A673 (cell line): ENCODE measurements at regions of chr2 and their contacts with region 1.

Region 1: DNA sequence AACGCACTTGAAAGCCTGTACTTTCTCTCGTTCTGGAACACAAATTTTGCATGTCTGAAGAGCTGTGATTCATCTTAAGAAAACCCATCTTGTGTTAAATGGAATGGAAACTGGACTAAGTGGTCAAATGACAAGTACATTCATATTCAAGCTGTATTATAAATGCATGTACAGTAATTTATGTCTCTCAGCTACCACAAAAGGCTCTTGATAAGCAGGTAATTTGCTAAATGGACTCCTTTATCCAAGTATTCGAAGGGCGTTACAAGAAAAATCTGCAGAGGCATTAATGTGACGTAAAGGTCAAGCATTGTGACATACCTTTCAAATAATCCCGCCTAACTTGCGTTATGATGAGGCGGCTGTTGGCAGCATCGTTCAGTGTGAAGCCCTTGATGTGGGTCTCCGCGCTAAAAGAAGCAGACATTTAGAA is 66.6 kb downstream of the ABCG8 start:
- DNase-seq: peak; percentile 7
- H3K4me3 ChIP-seq: no peak overlapping the region
- H3K27ac ChIP-seq: no peak overlapping the region
- H3K4me1 ChIP-seq: peaks cover 2% of the 10 kb centered on the region
- H3K27me3 ChIP-seq: no peaks in the 10 kb centered on the region
- CTCF ChIP-seq: no peak

Region 2: DNA sequence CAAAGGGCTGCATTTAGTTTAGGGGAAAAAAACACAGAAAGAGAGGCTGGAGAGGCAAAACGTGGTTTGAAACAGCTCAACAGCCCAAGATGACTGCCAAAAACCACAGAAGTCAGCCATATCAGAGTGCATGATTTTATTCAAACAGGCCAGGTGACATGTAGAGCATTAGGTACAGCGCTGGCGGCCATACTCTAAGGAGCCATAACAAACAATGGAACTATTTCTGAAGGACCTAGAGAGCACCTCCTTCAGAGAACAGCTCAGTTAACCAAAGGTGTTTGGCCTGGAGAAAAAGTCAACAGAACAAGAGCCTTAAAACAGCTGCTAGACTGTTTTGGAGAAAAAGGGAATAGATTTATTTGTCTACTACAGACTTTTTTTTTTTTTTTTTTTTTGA is 312.1 kb before region 1 on chr2:
- CTCF ChIA-PET with region 1: interaction called, 14 read pairs
- POLR2A ChIA-PET with region 1: no interaction called
- intact Hi-C with region 1: no loop called
- DNase-seq: no peak
- H3K4me3 ChIP-seq: no peak overlapping the region
- H3K27ac ChIP-seq: no peak overlapping the region
- H3K4me1 ChIP-seq: peaks cover 7% of the 10 kb centered on the region
- H3K27me3 ChIP-seq: no peaks in the 10 kb centered on the region
- CTCF ChIP-seq: no peak

Region 3: GRCh38 chr2:43927442-43927841 is 22.1 kb after region 1 on chr2:
- CTCF ChIA-PET with region 1: no interaction called
- POLR2A ChIA-PET with region 1: interaction called, 11 read pairs
- intact Hi-C with region 1: no loop called
- DNase-seq: no peak
- H3K4me3 ChIP-seq: no peak overlapping the region
- H3K27ac ChIP-seq: no peak overlapping the region
- H3K4me1 ChIP-seq: no peaks in the 10 kb centered on the region
- H3K27me3 ChIP-seq: no peaks in the 10 kb centered on the region
- CTCF ChIP-seq: no peak

Region 4: DNA sequence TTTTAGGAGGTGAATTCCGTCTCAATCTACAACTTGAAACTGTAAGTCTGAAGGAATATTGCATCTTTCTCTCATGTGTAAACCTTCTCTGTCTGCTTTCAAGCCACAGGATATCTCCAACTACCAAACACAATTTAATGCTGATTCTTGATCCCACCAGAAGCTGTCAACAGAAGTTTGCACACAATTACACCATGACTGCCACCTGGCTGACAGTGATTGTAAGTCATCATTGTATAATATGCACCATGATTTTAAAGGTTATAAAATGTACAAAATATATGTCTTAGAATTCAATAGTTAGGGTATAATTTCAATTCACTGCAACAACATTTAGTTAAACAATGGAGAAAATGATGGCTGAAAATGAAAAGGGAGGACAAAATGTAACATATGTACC is 437.5 kb after region 1 on chr2:
- CTCF ChIA-PET with region 1: no interaction called
- POLR2A ChIA-PET with region 1: no interaction called
- intact Hi-C with region 1: no loop called
- DNase-seq: peak; percentile 14
- H3K4me3 ChIP-seq: no peak overlapping the region
- H3K27ac ChIP-seq: no peak overlapping the region
- H3K4me1 ChIP-seq: no peaks in the 10 kb centered on the region
- H3K27me3 ChIP-seq: no peaks in the 10 kb centered on the region
- CTCF ChIP-seq: peak; percentile 49